ENCODE measurements at regions of chr2 and their contacts with region 1.

Region 1: DNA sequence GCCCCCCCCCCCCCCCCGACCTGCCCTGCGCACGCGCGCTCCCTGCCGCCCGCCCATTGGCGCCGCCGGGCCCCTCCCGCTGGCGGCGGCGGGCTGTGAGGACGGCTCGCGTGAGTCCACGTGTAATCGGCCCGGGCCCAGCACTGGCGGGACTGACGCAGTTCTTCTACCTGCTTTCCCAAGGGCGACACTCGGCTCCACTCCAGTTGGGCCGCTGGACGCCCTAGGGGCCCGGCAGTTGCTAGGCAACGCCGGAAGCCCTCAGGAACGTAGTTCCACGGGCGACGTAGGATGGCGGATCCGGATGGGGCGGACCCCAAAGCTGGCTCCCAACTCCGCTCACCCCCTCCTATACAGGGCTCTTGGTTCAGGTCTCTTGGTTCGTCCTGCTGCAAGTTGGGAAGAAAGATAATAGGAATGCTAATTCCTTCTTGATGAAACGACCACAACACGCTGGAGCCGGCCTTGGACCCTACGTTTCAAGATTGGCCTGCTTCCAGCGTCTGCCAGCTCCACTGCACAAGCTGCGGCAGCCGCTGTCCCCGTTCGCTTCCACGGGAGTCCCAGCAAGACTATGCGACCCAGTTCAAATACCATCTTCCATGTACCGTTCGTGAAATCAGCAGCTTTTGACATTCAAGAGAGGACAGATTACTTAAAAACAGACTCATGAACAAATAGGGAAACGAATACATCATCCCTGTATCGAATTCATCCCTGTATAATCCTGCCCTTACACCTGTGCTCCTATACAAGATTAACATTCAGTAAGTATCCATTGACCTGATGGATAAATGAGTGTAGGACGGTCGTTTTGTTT is 415 bp upstream of the MCFD2 start:
- DNase-seq: peak; percentile 95
- ATAC-seq: peak; percentile 94

Region 2: DNA sequence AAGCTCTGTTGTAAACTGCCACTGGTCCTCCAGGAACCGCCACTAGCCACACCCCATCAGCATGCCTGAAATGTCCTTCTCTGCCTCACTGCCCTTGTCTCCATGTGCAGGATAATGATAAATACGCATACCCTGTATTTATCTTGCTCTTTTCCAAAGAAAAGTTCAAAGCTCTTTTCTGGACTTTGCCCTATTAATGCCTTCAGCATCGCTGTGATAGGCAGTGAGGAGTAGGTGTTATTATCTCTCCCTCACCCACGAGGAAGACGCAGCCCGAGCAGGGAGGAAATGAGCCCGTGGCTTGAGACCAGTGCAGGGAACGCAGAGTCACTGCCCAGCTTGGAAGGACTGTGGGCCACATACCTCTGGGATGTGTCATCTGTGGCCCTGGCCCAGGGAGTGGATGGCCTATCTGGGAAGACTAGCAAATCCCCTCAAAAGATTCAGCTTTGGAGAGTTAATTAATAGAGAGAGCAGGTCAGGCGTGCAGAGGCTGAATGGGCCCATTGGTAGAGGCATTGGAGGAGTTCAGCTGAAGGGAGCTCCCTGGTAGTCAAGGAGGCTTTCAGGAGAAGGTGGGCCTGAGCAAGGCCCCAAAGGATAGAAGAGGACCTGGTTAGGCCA is 39.0 kb after region 1 on chr2:
- intact Hi-C with region 1: no loop called
- DNase-seq: peak; percentile 76
- ATAC-seq: peak; percentile 79

Region 3: DNA sequence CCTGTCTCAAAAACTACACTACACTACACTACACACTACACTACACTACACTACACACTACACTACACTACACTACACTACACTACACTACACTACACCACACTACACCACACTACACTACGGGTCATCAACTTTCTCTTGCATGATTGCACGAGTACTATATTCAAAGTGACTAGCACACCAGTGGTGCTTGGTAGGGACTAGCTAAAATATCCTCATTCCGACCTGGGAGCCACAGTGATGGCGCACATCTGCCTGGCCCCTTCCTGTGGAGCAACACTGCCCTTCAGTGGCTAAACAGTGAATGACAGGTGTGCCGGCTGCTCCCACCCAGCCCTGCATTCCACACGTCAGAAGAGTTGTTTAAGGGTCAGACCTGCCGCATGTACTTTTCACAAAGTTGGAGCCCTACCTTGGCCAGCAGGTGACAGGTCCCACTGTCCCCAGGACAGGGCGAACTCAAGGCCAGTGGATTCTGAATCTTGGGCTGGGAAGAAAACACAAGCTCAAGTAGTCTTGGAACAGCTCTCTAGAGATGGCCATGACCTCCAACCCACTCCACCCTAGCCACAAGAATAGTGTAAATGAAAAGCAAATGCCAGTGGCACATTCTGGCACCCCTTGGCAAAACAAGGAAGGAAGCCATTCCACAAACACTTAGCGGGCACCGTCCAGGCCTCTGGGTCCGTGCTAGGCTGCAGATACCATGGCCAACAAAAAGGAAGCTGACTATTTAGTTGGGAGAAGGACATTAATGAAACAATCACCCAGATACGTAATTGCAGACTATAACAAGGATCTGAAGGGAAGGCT is 407.2 kb after region 1 on chr2:
- intact Hi-C with region 1: loop called (anchors 5 kb)
- DNase-seq: peak; percentile 82
- ATAC-seq: peak; percentile 97